ENCODE measurements at regions of chr1 and their contacts with region 1.

Region 1: GRCh38 chr1:12040457-12041051 is 21.3 kb downstream of the MIIP start:
- DNase-seq: no peak
- H3K4me3 Mint-ChIP-seq: no peak overlapping the region
- H3K27ac Mint-ChIP-seq: peak overlapping the region; percentile 29
- H3K4me1 Mint-ChIP-seq: peaks cover 48% of the 10 kb centered on the region
- H3K27me3 Mint-ChIP-seq: no peaks in the 10 kb centered on the region

Region 2: DNA sequence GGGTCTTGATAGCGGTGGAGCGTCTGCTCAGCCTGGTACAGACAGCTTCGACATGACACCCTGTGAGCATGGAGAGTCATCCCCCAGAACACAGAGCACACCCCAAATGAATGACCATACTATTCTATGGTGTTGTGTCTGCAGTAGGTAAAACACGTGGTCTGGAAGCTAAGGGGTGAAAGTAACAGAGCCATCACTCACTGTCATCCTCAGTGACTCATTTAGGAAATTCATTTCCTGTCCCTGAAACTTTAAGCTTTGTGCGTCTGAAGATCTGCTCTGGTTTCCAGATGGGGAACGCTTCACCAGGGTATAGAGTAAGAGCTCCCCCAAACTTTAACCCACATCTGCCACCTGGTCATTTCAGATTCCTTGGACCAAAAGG is 656.4 kb before region 1 on chr1:
- intact Hi-C with region 1: loop called (anchors 10 kb)
- DNase-seq: no peak
- H3K4me3 Mint-ChIP-seq: peak overlapping the region; percentile 42
- H3K27ac Mint-ChIP-seq: peak overlapping the region; percentile 70
- H3K4me1 Mint-ChIP-seq: peaks cover 16% of the 10 kb centered on the region
- H3K27me3 Mint-ChIP-seq: peaks cover 35% of the 10 kb centered on the region

Region 3: GRCh38 chr1:12052997-12053686 is 12.6 kb after region 1 on chr1:
- intact Hi-C with region 1: no loop called
- DNase-seq: no peak
- H3K4me3 Mint-ChIP-seq: no peak overlapping the region
- H3K27ac Mint-ChIP-seq: peak overlapping the region; percentile 7
- H3K4me1 Mint-ChIP-seq: peaks cover 58% of the 10 kb centered on the region
- H3K27me3 Mint-ChIP-seq: no peaks in the 10 kb centered on the region

Measured in activated T-helper 1 cell treated with anti-CD3 and anti-CD28 coated beads, Interleukin-12 subunit alpha, Interleukin-12 subunit beta, Interleukin-2, Interleukin-4 antibody, amounts not matched to agents 30 ng/mL and 10 ng/mL and 1 ng/mL, durations not matched to agents 14 hours and 24 hours and 36 hours (primary cell).